ENCODE measurements at regions of chr17 and their contacts with region 1.

Region 1: DNA sequence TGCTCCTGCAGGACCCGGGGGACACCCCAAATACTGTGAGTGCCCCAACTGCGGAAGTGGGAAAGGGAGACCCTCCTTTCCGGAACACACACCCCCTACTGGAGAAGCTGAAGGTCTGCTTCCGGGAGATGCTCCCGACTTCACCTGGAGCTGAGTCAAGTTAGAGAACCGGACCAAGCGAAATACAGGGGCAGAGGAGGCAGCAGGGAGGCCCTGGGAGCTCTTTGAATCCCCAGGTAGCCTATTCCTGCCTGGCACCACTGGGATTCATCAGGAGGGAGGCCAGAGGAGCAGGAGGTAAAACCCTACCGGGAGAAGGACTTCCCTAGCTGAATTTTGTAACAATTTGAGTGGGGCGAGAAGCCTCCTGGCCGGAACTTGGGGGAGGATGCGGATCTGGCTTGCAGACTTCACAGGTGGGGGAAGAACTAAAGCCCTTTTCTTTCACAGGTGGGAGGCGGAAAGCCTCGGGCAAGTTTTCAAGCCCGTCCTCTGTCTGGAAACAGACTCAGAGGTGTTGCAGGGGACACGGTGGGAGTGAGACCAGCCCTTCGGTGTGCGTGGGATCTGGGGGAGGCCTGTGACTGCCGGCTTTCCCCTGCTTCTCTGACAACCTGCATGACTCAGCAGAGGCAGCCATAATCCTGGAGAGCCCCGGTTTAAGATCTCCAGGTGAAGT is 22.4 kb upstream of the TEKT1 start:
- DNase-seq: no peak
- H3K4me3 ChIP-seq: no peak overlapping the region
- H3K27ac ChIP-seq: no peak overlapping the region
- H3K4me1 ChIP-seq: no peaks in the 10 kb centered on the region
- H3K27me3 ChIP-seq: peaks cover 0 to 13% of the 10 kb centered on the region in 2 donors
- CTCF ChIP-seq: no peak

Region 2: DNA sequence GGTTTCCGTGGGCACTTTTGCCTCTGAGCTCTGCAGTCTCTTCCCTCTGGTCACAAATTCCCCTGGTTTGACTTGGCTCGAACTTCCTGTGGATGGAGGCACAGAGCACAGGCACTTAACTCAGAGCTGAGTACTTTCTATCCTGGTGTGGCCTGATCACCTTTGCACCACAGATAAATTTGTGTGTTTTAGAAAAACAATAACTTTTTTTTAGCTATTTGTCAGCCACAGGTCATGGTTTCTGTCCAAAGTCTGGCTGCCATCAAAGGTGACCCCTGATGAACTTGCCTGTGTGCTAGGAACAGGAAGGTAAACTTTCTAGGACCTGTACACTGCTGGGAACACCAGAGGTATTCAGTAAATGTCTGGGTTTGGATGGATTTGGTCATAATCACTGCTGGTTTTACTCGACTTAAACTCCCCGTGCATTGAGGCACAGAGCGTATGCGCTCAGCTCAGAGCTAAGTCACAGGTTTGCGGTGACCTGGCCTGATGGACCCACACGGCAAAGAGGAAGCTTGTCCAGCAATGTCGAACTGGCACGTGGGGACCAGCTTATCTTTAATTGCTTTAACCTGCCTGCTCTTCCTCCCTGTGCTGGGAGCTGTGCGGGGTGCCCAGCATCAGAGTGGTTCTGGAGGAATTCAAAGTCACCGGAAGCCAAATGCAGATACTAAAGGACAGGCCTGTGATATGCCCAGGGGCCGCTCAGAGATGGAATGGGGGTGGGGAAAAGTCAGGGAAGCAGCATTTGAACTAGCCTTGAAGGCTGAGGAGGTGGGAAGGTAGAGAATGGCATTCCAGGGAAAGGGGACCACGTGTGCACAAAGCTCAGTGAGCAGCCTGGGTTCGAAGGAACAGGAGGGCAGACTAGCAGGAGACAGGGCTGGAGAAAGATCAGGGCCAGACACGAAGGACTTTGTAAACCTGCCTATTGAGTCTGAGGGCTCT is 153.6 kb before region 1 on chr17:
- intact Hi-C with region 1: loop called (anchors 10 kb)
- DNase-seq: no peak
- H3K4me3 ChIP-seq: no peak overlapping the region
- H3K27ac ChIP-seq: no peak overlapping the region
- H3K4me1 ChIP-seq: no peaks in the 10 kb centered on the region
- H3K27me3 ChIP-seq: peaks cover 0 to 25% of the 10 kb centered on the region in 2 donors
- CTCF ChIP-seq: no peak

Region 3: DNA sequence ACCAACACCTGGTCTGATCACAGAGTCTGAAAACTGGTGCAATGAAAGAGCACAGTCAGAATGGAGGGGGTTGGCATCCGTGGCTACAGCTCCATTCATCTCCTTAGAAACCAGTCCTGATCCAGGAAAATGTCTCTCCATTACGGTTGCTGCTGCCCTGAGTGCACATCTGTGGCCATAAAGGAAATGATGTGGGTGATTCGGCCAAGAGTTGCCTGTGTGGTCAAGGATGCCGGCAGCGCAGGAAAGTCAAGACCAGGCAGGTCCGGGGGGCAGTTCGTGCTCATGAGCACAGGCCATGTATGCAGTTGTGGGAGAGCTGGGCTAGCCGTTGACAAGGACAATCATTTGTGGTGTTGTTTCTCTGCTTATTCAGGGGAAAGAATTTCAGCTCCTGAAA is 92.1 kb before region 1 on chr17:
- intact Hi-C with region 1: no loop called
- DNase-seq: no peak
- H3K4me3 ChIP-seq: no peak overlapping the region
- H3K27ac ChIP-seq: no peak overlapping the region
- H3K4me1 ChIP-seq: peaks cover 0 to 11% (median 7%) of the 10 kb centered on the region in 4 donors
- H3K27me3 ChIP-seq: no peaks in the 10 kb centered on the region
- CTCF ChIP-seq: no peak

Measured in tibial artery (tissue), 4 donors.